ENCODE measurements at regions of chr5 and their contacts with region 1.

Region 1: DNA sequence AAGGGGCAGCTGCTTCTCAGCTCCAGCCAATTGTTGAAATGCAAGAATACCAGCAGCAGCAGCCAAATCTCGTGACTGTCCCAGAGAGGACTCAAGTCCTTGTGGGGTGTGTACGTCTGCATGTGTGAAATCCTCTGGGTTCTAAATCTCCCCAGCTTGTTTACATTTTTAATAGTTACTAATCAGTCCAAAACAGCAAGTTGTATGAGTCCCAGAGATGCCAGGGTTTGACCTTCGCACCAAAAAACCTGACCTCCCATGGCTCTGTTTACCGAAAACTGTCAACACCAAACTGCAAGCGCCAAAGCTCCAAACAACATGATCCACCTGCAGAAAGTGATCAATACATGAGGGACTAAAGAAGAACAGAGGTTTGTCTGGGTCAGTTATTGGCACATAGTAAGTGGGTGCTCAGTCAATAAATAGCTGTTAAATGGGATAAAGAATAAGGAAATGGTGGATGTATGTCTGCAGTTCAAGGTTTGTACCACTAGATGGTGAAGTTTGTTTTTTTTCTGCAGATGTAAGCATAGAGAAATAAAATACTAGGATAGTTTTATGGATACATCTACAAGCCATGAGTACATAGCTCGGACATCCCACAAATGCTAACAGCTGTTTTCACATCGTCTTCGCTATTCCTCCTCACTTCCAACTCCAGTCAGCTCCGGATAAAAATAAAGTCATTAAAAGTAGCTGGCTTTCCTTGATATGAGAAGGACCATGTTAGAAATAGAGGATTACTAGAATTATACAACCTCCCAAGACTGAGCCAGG is 85.3 kb upstream of the ADRB2 start:
- DNase-seq: peak in 3 of 14 experiments; percentile 46 to 70 (median 63)
- ATAC-seq: no peak
- H3K4me3 ChIP-seq: no peak overlapping the region
- H3K4me3 Mint-ChIP-seq: no peak overlapping the region
- H3K27ac ChIP-seq: no peak overlapping the region
- H3K27ac Mint-ChIP-seq: no peak overlapping the region
- H3K4me1 ChIP-seq: no peaks in the 10 kb centered on the region
- H3K4me1 Mint-ChIP-seq: no peaks in the 10 kb centered on the region
- H3K27me3 ChIP-seq: no peaks in the 10 kb centered on the region
- H3K27me3 Mint-ChIP-seq: peaks cover 26% of the 10 kb centered on the region
- CTCF ChIP-seq: peak; percentile 70

Region 2: DNA sequence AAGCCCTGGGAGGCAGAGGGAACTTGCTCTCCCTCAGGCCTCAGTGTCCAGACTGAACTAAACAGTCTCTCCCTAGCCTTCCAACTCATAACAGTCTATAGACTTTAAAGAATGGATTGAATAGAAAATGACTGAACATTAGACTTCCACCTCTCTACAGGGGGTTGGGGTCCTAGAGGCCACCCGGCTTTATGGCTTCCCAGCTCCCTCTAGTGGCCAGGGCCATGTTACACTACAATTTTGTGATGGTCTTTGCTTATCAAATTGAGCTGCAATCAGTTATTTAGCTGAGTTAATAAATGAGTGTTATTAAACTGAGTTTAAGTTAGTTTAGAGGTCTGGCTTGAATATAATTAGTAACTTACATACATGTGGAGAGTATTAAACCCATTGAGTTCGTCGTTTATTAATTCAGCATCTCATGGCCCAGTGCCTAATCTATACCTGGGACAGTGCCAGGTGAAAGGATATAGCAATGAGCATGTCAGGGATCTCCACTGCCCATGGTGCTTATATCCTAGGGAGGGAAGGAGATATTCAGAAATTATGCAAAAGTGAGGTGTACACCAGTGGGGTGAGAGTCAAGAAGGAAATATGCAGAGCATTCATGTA is 216.5 kb after region 1 on chr5:
- CTCF ChIA-PET with region 1: no interaction called
- POLR2A ChIA-PET with region 1: no interaction called
- intact Hi-C with region 1: loop called in 1 of 2 experiments (anchors 2 kb)
- DNase-seq: peak in 13 of 14 experiments; percentile 6 to 63 (median 25)
- ATAC-seq: no peak
- H3K4me3 ChIP-seq: no peak overlapping the region
- H3K4me3 Mint-ChIP-seq: no peak overlapping the region
- H3K27ac ChIP-seq: no peak overlapping the region
- H3K27ac Mint-ChIP-seq: no peak overlapping the region
- H3K4me1 ChIP-seq: no peaks in the 10 kb centered on the region
- H3K4me1 Mint-ChIP-seq: no peaks in the 10 kb centered on the region
- H3K27me3 ChIP-seq: no peaks in the 10 kb centered on the region
- H3K27me3 Mint-ChIP-seq: no peaks in the 10 kb centered on the region
- CTCF ChIP-seq: peak; percentile 72

Region 3: GRCh38 chr5:148998174-148998797 is 257.1 kb after region 1 on chr5:
- CTCF ChIA-PET with region 1: interaction called, 3 read pairs
- POLR2A ChIA-PET with region 1: no interaction called
- intact Hi-C with region 1: loop called (anchors 1 to 2 kb)
- DNase-seq: peak in 5 of 14 experiments; percentile 5 to 73 (median 66)
- ATAC-seq: no peak
- H3K4me3 ChIP-seq: no peak overlapping the region
- H3K4me3 Mint-ChIP-seq: no peak overlapping the region
- H3K27ac ChIP-seq: no peak overlapping the region
- H3K27ac Mint-ChIP-seq: no peak overlapping the region
- H3K4me1 ChIP-seq: no peaks in the 10 kb centered on the region
- H3K4me1 Mint-ChIP-seq: no peaks in the 10 kb centered on the region
- H3K27me3 ChIP-seq: no peaks in the 10 kb centered on the region
- H3K27me3 Mint-ChIP-seq: peaks cover 36% of the 10 kb centered on the region
- CTCF ChIP-seq: peak; percentile 32

Region 4: DNA sequence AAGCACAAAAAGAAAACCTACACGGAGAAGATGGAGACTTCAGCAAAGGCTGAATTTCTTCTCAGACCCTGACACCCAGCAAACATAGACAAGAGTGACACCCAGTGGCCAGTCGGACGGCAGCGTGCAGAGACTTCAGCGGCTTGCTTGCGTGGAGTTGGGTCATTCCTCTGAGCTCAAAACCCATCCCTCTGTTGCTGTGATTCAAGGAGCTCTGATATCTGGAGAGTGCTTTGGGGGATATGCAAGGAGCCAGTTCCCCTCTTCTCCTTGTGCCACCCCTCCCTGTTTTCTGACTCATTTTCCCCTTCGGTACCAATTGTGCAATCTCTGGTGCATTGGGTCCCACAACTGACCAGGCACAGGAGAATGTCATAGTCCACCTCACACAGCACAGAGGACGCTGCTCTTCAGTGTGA is 294.2 kb after region 1 on chr5:
- CTCF ChIA-PET with region 1: interaction called, 9 read pairs
- POLR2A ChIA-PET with region 1: no interaction called
- intact Hi-C with region 1: loop called in 1 of 2 experiments (anchors 1 kb)
- DNase-seq: peak; percentile 47 to 78 (median 57)
- ATAC-seq: peak; percentile 74
- H3K4me3 ChIP-seq: no peak overlapping the region
- H3K4me3 Mint-ChIP-seq: no peak overlapping the region
- H3K27ac ChIP-seq: no peak overlapping the region
- H3K27ac Mint-ChIP-seq: no peak overlapping the region
- H3K4me1 ChIP-seq: peaks cover 6% of the 10 kb centered on the region
- H3K4me1 Mint-ChIP-seq: peaks cover 25% of the 10 kb centered on the region
- H3K27me3 ChIP-seq: no peaks in the 10 kb centered on the region
- H3K27me3 Mint-ChIP-seq: peaks cover 5% of the 10 kb centered on the region
- CTCF ChIP-seq: peak; percentile 83

Region 5: GRCh38 chr5:149114403-149115312 is 373.5 kb after region 1 on chr5:
- CTCF ChIA-PET with region 1: interaction called, 4 read pairs
- POLR2A ChIA-PET with region 1: no interaction called
- intact Hi-C with region 1: loop called in 1 of 2 experiments (anchors 5 kb)
- DNase-seq: peak in 12 of 14 experiments; percentile 7 to 68 (median 16)
- ATAC-seq: peak; percentile 32
- H3K4me3 ChIP-seq: no peak overlapping the region
- H3K4me3 Mint-ChIP-seq: no peak overlapping the region
- H3K27ac ChIP-seq: no peak overlapping the region
- H3K27ac Mint-ChIP-seq: no peak overlapping the region
- H3K4me1 ChIP-seq: no peaks in the 10 kb centered on the region
- H3K4me1 Mint-ChIP-seq: no peaks in the 10 kb centered on the region
- H3K27me3 ChIP-seq: peaks cover 4 to 28% of the 10 kb centered on the region in 2 experiments
- H3K27me3 Mint-ChIP-seq: peaks cover 37% of the 10 kb centered on the region
- CTCF ChIP-seq: peak; percentile 59